ENCODE measurements at regions of chrX and their contacts with region 1.

Region 1: DNA sequence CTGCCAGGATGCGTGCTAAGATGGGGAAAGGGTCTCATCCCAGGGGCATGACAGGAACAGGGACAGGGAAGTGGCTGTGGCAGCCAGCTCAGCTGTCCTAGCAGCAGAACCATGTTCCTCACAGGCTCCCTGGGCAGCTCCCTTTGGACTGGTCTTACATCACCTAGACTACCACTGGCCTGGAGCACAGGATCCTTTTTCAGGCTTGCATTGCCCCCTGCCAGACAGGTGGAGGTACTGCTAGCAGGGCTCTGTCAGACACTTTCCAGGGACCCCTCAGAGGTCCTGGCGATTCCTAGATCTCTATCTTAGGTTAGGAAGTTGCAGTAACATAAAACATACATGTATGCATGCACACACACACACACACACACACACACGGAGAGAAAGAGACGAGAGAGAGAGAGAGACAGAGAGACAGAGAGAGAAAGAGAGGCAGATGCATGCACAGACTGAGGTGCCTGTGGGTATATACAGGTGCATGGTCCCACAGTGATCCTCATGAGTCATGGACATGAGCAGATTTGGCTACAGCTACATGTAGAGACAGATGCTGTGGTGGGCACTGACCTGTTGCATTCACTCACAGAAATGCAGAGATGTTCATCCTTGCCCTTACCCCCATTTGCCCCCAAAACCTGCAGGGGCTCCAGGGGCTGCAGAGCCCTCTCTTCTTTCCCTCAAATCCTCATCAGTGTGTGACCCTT is 63.6 kb downstream of the STARD8 start:
- DNase-seq: no peak
- H3K4me3 ChIP-seq: no peak overlapping the region
- H3K27me3 ChIP-seq: no peaks in the 10 kb centered on the region
- CTCF ChIP-seq: peak; percentile 64

Region 2: DNA sequence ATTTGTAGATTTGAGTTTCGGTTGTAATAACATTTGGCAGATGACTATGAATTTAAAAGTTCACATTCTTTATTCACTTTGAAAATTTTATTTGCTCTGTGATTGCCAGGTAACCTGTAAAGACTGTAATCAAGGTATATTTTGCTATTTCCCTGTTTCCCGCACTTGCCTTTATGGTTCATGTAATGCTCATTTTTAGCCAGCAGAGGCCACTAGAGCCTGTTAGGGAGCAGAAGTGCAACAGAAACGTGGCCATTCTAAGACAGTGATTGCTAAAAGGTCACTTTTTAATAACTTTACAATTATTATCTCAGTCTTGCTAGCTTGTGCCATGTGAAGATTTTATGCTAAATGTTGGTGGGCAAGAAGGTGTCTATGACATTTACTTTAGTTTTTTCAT is 199.8 kb before region 1 on chrX:
- CTCF ChIA-PET with region 1: interaction called, 15 read pairs
- POLR2A ChIA-PET with region 1: no interaction called
- DNase-seq: no peak
- H3K4me3 ChIP-seq: no peak overlapping the region
- H3K27me3 ChIP-seq: no peaks in the 10 kb centered on the region
- CTCF ChIP-seq: peak; percentile 69

Region 3: DNA sequence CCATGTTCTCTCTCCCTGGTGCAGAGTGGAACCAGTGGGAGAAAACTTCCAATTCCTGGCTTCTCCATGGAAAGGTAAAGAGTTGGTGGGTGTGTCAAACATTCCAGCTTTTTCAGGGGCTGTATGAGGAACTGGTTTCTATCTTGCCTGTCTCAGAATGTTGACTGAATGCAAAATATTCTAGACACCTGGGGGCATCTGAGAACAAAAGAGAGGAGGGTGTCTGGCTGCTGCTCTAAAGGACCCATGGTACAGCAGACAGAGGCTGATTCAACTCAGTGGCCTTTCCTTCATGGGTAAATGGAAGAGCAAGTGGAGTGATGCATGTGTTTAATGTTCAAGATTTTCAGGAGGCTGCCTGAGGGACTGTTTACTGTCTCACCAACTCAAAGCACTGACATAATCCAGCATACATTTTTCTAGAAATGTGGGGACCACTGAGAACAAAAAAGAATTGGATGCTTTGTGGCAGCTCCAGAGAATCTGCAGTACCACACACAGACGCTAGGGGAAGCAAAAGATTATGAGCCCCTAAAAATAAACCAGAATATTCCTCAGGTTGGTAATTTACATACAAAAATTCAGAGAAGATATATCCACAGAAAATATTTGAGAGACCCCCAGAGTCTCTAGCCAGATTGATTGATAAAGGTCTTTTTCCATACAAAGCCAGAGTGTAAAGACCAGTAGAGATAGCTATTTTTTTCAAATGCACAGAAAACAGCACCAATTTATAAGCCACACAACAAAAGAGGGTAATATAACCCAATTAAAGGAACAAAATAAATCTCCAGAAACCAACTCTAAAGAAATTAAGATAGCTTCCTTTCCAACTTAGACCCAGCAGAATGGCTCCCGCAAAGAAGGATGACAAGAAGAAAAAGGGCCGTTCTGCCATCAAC is 111.5 kb before region 1 on chrX:
- CTCF ChIA-PET with region 1: interaction called, 44 read pairs
- POLR2A ChIA-PET with region 1: no interaction called
- DNase-seq: no peak
- H3K4me3 ChIP-seq: no peak overlapping the region
- H3K27me3 ChIP-seq: no peaks in the 10 kb centered on the region
- CTCF ChIP-seq: peak; percentile 74